G401 (cell line): ENCODE measurements at regions of chr22 and their contacts with region 1.

Region 1: GRCh38 chr22:39859903-39860588 is 33.5 kb downstream of the ENTHD1 start:
- DNase-seq: no peak

Region 2: DNA sequence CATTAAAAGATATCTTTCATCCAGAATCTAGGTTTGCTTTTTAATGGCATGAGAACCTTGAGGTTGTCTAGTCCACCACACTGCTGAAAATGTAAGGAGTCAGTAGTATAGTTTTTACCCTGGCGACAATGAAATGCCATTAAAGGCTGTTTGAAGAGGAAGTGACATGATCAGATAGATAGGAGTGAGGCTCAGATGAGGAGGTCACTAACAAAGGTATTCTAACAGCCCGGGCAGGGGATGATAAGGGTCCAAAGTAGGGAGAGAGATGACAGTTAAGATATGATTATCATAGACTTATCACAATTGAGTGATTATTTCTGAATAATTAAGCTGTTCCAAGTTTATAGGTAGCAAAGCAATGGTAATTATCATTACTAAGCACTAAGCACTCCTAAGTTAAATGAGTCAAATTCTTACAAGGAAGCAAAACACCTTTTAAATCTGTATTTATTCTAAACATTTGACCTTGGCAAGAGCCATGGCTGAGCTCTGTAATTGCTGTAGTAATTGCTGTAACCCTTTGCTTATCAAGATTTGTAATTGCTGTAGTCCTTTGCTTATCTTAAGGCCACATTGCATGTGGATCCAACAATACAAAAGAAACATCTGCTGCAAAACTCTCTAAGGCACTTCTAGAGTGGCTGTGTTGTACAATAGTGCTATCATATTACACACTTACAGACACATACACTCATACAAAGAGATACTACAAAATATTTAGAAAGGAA is 59.1 kb before region 1 on chr22:
- in situ Hi-C with region 1: loop called (anchors 5 kb)
- DNase-seq: no peak